ENCODE measurements at regions of chr13 and their contacts with region 1.

Region 1: DNA sequence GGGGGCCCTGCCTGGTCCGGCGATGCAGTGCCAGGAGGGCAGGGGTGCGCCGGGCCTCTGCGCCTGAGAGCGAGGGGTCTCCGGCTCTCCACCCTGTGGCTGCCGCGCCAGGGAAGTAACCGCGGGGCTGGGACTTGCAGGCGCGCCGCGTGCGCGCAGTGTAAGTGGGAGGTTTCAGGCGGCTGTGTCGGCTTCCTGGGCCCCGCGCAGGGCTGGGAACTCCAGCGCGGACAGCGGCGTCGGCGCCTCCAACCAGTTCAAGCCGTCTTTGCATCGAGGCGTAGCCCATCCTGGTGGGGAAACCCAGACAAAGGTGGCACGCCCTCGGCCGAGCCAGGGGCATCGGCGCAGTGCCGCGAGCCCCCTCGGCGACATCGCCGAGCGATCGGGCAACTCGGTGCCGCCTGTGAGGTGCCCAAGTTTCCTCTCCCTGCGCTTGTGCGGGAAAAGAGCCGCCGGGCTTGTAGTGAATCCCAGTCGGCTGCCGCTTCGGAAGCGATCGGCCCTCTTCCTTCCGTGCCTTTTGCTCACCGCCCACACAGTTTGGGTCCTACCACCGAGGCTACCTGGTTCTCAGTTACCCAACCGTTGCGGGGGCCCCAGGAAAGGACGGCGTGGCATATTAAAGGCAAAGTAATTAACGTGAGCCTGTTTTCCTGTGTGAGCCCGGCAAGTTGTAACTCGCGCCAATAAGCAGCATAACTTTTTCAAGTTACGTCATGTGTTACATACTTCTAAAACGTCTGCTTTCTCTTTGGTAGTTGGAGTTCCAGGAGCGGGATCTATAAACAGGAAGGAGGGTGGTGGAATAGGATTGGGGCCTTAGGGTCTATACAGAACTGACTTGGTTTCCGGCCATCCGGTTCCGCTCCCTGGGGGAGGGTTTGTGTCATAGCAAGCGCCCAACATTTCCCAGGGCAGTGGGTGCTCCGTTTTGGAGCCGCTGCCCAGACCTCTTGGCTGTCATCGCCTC is 1.2 kb downstream of the LRCH1 start:
- DNase-seq: peak; percentile 80
- ATAC-seq: peak; percentile 80

Region 2: GRCh38 chr13:46712524-46712923 is 158.4 kb after region 1 on chr13:
- intact Hi-C with region 1: loop called (anchors 5 kb)
- DNase-seq: no peak
- ATAC-seq: no peak

Measured in sciatic nerve (tissue), 2 donors.